Caco-2 (cell line): ENCODE measurements at regions of chr14 and their contacts with region 1.

Region 1: DNA sequence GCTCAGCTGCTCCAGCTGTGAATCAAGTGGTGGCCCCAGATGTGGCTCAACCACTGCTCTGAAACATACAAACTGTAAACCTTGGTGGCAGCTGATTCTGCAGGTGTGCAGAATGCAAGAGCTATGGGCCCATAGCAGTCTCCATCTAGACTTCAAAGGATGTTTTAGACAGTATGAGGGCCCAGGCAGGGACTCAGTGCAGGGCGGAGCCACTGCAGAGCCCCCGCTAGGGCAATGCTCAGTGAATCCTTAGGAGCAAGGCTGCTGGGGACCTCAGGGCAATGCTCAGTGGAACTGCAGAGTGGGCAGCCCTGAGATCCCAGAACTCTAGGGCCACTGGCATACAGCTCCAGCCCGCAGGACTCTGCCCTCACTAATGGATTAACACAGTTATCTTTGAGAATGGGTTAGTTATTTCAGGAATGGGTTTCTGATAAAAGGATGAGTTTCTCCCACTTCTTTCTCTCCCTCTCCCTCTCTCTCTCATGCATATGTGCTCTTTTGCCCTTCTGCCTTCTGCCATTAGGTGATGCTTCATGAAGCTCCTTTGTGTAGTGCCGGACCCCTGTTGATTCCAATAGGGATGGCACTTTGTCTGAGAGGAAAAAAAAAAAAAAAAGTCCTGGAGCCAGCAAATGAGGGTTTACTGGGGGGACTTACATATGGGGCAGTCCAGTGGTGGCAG is 48.4 kb upstream of the JDP2 start:
- DNase-seq: no peak
- H3K4me3 ChIP-seq: no peak overlapping the region
- H3K4me3 Mint-ChIP-seq: peak overlapping the region; percentile 2
- H3K27ac Mint-ChIP-seq: peak overlapping the region; percentile 81
- H3K4me1 ChIP-seq: peaks cover 41% of the 10 kb centered on the region
- H3K4me1 Mint-ChIP-seq: peaks cover 53% of the 10 kb centered on the region
- H3K27me3 ChIP-seq: no peaks in the 10 kb centered on the region
- H3K27me3 Mint-ChIP-seq: no peaks in the 10 kb centered on the region
- CTCF ChIP-seq: no peak

Region 2: DNA sequence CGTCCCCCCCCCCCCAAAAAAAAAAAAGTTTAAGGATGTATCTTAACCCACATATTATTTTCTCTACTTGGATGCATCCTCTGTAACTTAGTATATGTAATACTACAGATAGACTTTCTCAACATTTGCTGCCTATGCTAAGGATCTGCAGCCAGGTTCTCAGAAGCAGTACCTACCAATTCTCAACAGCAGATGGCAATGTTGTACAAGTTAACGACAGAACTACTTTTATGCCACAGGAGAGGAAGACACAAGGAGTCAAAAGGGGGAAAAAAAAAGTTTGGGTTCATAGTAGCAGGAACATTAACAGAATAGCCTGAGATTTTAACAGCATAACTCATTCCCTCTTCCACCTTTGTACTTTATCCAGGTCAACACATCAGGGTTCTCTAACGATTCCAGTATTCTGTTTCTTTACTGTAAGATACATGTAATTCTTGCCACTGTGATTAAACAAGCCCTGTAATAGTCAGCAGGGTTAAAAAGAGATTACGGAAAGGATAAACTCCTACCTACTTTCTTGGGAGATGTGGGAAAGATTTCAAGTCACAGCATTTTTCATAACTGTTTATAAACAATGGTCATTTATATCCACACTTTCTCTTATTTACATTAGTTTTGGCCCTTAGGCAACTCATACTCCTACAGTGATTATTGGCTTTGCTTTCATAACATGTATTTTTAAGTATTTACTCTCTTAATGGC is 246.9 kb before region 1 on chr14:
- CTCF ChIA-PET with region 1: no interaction called
- POLR2A ChIA-PET with region 1: no interaction called
- intact Hi-C with region 1: no loop called
- DNase-seq: peak; percentile 62 to 80
- H3K4me3 ChIP-seq: no peak overlapping the region
- H3K4me3 Mint-ChIP-seq: no peak overlapping the region
- H3K27ac Mint-ChIP-seq: peak overlapping the region; percentile 51
- H3K4me1 ChIP-seq: 0 out of 2 replicates have a peak, but pooled peaks cover 7% of the 10 kb centered on the region
- H3K4me1 Mint-ChIP-seq: no peaks in the 10 kb centered on the region
- H3K27me3 ChIP-seq: no peaks in the 10 kb centered on the region
- H3K27me3 Mint-ChIP-seq: no peaks in the 10 kb centered on the region
- CTCF ChIP-seq: peak; percentile 62 to 75

Region 3: DNA sequence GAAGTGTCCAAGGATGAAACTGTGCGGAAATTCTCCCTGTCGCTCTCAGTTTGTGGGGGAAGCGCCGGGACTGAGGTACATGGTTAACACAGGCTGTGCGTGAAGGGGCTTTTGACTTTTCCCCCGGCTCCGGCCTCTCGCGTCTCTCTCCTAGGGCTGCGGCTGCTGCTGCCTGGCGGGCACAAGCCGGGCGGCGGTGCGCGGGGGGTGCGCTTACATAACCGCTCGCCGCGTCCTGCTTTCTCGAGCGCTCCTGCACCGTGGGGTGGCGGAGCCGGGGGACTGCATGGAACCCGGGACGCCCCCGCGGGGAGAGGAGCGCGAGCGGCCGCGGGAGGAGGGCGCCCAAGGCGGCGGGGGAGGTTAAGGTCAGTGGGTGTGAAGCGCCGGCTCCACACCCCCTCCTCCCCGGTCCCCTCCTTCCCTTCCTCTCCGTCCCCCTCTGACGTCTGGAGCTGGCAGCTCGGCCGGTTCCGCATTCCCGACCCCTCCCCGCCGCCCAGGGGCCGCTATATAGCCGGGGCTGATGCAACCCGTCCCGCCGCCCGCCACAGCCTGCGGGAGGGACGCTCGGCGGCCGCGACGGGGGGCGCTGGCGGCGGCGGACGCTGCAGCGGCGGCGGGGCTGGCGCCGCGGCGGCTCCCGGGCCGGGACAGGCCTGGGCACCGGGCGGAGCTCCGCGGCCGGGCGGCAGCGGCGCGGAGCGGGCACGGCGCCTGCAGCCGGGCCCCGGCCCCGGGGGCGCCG is 48.3 kb after region 1 on chr14 and contains the start of gene JDP2:
- CTCF ChIA-PET with region 1: interaction called, 3 read pairs
- POLR2A ChIA-PET with region 1: interaction called, 3 read pairs
- intact Hi-C with region 1: loop called (anchors 5 kb)
- DNase-seq: peak; percentile 93 to 96
- H3K4me3 ChIP-seq: peak within 1 kb of the TSS; percentile 84
- H3K4me3 Mint-ChIP-seq: peak within 1 kb of the TSS; percentile 83
- H3K27ac Mint-ChIP-seq: peak within 1 kb of the TSS; percentile 67
- H3K4me1 ChIP-seq: peaks cover 19% of the 10 kb centered on the region
- H3K4me1 Mint-ChIP-seq: peaks cover 18% of the 10 kb centered on the region
- H3K27me3 ChIP-seq: no peaks in the 10 kb centered on the region
- H3K27me3 Mint-ChIP-seq: no peaks in the 10 kb centered on the region
- CTCF ChIP-seq: peak in 1 of 2 experiments; percentile 34
- total RNA-seq, gene JDP2: 95.7 TPM in 2 replicates

Region 4: DNA sequence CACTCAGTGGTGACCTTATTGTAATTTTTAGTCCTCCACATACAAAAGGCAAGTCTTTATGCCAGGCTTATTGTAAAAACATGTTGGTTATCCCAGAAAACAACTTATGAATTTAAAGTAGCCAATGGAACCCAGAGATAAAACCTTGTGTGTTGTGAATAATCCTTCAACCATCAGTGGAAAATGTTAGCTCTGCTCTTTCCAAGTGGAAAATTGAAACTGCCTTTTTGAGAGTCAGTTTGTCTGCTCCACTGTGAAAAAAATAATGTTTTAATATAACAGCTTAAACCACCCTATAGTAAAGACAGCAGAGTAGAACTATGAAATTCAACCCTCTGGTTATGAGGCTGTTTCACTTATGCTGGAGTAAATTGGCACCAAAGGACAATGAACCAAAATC is 393.7 kb after region 1 on chr14:
- CTCF ChIA-PET with region 1: no interaction called
- POLR2A ChIA-PET with region 1: no interaction called
- intact Hi-C with region 1: no loop called
- DNase-seq: no peak
- H3K4me3 ChIP-seq: no peak overlapping the region
- H3K4me3 Mint-ChIP-seq: no peak overlapping the region
- H3K27ac Mint-ChIP-seq: no peak overlapping the region
- H3K4me1 ChIP-seq: no peaks in the 10 kb centered on the region
- H3K4me1 Mint-ChIP-seq: no peaks in the 10 kb centered on the region
- H3K27me3 ChIP-seq: no peaks in the 10 kb centered on the region
- H3K27me3 Mint-ChIP-seq: no peaks in the 10 kb centered on the region
- CTCF ChIP-seq: no peak